ENCODE measurements at regions of chr3 and their contacts with region 1.

Region 1: DNA sequence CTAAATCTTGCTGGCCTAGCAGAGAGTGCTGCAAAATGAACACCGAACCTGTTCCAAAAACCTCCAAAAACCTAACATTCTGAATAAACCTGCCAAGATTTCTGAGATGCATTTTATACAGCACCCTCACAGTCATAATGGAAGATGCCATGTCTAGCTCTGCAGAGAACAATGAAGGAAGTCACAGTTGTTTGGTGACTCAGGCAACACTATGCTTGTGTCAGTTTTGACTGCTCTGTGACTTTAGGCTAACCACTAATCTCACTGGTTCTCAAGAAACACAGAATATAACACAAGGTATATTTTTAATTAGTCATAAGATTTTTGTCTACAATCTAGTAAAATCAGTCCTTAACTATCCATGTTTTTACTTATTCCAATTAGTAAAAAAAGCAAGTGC is 606.6 kb downstream of the TBL1XR1 start:
- DNase-seq: peak; percentile 24
- H3K4me3 ChIP-seq: no peak overlapping the region
- H3K27ac ChIP-seq: no peak overlapping the region
- H3K4me1 ChIP-seq: peaks cover 16% of the 10 kb centered on the region
- H3K27me3 ChIP-seq: no peaks in the 10 kb centered on the region
- CTCF ChIP-seq: no peak
- POLR2A ChIP-seq: no peak

Region 2: DNA sequence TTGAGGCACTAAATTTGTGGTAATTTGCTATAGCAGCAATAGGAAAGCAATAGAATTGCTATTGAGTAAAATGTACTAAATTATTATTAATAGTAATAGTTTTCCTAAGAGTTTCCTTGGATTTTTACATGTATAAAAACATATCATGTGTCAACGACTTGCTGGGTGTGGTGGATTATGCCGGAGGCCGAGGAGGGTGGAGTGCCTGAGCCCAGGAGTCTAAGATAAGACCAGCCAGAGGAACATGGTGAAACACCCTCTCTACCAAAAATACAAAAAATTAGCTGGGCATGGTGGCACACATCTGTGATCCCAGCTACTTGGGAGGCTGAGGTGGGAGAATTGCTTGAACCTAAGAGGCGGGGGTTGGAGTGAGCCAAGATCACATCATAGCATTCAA is 143.4 kb before region 1 on chr3:
- CTCF ChIA-PET with region 1: no interaction called
- POLR2A ChIA-PET with region 1: no interaction called
- dilution Hi-C with region 1: no loop called
- intact Hi-C with region 1: no loop called
- DNase-seq: no peak
- H3K4me3 ChIP-seq: no peak overlapping the region
- H3K27ac ChIP-seq: no peak overlapping the region
- H3K4me1 ChIP-seq: no peaks in the 10 kb centered on the region
- H3K27me3 ChIP-seq: no peaks in the 10 kb centered on the region
- CTCF ChIP-seq: no peak
- POLR2A ChIP-seq: no peak

Region 3: GRCh38 chr3:176566757-176567156 is 24.0 kb before region 1 on chr3:
- CTCF ChIA-PET with region 1: no interaction called
- POLR2A ChIA-PET with region 1: no interaction called
- dilution Hi-C with region 1: no loop called
- intact Hi-C with region 1: no loop called
- DNase-seq: no peak
- H3K4me3 ChIP-seq: no peak overlapping the region
- H3K27ac ChIP-seq: no peak overlapping the region
- H3K4me1 ChIP-seq: no peaks in the 10 kb centered on the region
- H3K27me3 ChIP-seq: no peaks in the 10 kb centered on the region
- CTCF ChIP-seq: no peak
- POLR2A ChIP-seq: no peak

Region 4: GRCh38 chr3:176755552-176755951 is 164.8 kb after region 1 on chr3:
- CTCF ChIA-PET with region 1: no interaction called
- POLR2A ChIA-PET with region 1: no interaction called
- dilution Hi-C with region 1: no loop called
- intact Hi-C with region 1: no loop called
- DNase-seq: no peak
- H3K4me3 ChIP-seq: no peak overlapping the region
- H3K27ac ChIP-seq: no peak overlapping the region
- H3K4me1 ChIP-seq: no peaks in the 10 kb centered on the region
- H3K27me3 ChIP-seq: no peaks in the 10 kb centered on the region
- CTCF ChIP-seq: no peak
- POLR2A ChIP-seq: no peak

Region 5: GRCh38 chr3:177015881-177016280 is 425.2 kb after region 1 on chr3:
- CTCF ChIA-PET with region 1: no interaction called
- POLR2A ChIA-PET with region 1: no interaction called
- dilution Hi-C with region 1: no loop called
- intact Hi-C with region 1: loop called (anchors 5 kb)
- DNase-seq: no peak
- H3K4me3 ChIP-seq: no peak overlapping the region
- H3K27ac ChIP-seq: no peak overlapping the region
- H3K4me1 ChIP-seq: no peaks in the 10 kb centered on the region
- H3K27me3 ChIP-seq: no peaks in the 10 kb centered on the region
- CTCF ChIP-seq: no peak
- POLR2A ChIP-seq: no peak

Measured in endothelial cell of umbilical vein (primary cell).